ENCODE measurements at regions of chr15 and their contacts with region 1.

Region 1: DNA sequence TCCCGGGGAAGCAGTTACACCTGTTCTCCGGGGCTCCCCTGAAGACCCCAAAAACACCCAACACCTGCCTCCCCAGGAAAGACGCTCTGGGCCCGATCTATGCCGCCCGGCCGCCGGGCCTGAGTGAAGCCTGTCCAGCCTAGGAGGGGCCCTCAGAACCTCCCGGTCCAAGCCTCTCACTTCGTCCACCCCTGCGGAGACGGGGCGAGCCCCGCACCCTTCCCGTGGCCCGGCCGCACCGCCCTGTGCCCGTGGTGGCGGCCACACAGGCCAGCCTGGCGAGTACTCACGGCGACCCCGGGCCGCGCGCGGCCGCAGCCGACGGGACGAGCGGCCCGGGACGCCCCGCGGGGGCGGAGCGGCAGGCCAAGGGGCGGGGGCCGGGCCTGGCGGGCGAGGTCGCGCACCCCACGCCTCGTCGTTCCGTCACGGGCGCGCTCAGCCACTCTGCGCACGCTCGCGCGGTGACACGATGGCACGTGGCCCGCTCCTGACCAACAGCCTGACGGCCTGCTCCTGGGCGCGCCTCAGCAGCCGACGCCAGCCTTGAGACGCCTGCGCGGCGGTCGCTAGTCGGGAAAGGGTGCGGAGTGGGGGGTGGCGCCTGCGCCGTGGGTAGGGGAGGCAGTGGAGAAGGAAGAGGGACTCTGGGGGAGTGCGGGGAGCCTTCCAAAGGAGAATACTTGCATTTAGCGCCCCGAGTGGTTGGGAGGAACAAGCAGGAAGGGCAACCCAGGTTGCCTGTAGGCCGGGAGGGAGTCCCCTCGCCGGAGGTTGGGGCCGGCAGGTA is at the start of gene PARP6:
- DNase-seq: peak; percentile 97 to 98 (median 98)
- ATAC-seq: peak; percentile 99
- H3K4me3 ChIP-seq: peak within 1 kb of the TSS; percentile 74
- H3K27ac ChIP-seq: peak within 1 kb of the TSS; percentile 77
- H3K4me1 ChIP-seq: peaks cover 12 to 17% of the 10 kb centered on the region in 2 experiments; a peak in 4 of 5 replicates
- H3K27me3 ChIP-seq: no peaks in the 10 kb centered on the region
- CTCF ChIP-seq: peak; percentile 63 to 83 (median 70)
- EP300 ChIP-seq: peak; percentile 31; the same call in 1 of the 2 replicates
- POLR2A ChIP-seq: peak; percentile 66
- RAD21 ChIP-seq: 0 out of 4 replicates have a peak, but pooled peaks of 1 of the 2 experiments have one; percentile 8
- polyA plus RNA-seq, gene PARP6: 14.8 to 18.9 TPM

Region 2: DNA sequence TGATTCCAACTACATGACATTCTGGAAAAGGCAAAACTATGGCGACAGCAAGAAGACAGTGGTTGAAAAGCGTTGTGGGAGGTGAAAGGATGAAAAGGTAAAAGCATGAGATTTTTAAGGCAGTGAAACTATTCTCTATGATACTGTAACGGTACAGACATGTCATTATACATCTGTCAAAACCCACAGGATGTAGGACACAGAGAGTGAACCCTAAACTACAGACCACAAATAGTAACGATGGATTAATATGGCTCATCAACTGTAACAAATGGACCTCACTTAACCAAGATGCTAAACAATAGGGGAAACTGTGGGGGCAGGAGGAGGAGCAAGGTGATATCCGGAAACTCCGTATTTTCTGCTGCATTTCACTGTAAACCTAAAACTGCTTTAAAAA is 193.5 kb before region 1 on chr15:
- CTCF ChIA-PET with region 1: no interaction called
- POLR2A ChIA-PET with region 1: no interaction called
- in situ Hi-C with region 1: no loop called
- intact Hi-C with region 1: no loop called
- DNase-seq: no peak
- ATAC-seq: no peak
- H3K4me3 ChIP-seq: no peak overlapping the region
- H3K27ac ChIP-seq: no peak overlapping the region
- H3K4me1 ChIP-seq: no peaks in the 10 kb centered on the region
- H3K27me3 ChIP-seq: no peaks in the 10 kb centered on the region; a peak in 1 of 5 replicates
- CTCF ChIP-seq: no peak
- EP300 ChIP-seq: no peak
- POLR2A ChIP-seq: no peak
- RAD21 ChIP-seq: no peak

Region 3: GRCh38 chr15:72206677-72207000 is 65.8 kb before region 1 on chr15:
- CTCF ChIA-PET with region 1: no interaction called
- POLR2A ChIA-PET with region 1: no interaction called
- in situ Hi-C with region 1: loop called (anchors 5 kb)
- intact Hi-C with region 1: no loop called
- DNase-seq: no peak
- ATAC-seq: no peak
- H3K4me3 ChIP-seq: no peak overlapping the region
- H3K27ac ChIP-seq: no peak overlapping the region
- H3K4me1 ChIP-seq: peaks cover 0 to 3% of the 10 kb centered on the region in 2 experiments; a peak in 1 of 5 replicates
- H3K27me3 ChIP-seq: no peaks in the 10 kb centered on the region
- CTCF ChIP-seq: no peak
- EP300 ChIP-seq: no peak
- POLR2A ChIP-seq: no peak
- RAD21 ChIP-seq: no peak

Region 4: GRCh38 chr15:72237286-72238224 is 34.9 kb before region 1 on chr15:
- CTCF ChIA-PET with region 1: no interaction called
- POLR2A ChIA-PET with region 1: no interaction called
- in situ Hi-C with region 1: no loop called
- intact Hi-C with region 1: loop called (anchors 2 kb)
- DNase-seq: peak; percentile 89 to 95 (median 91)
- ATAC-seq: peak; percentile 97
- H3K4me3 ChIP-seq: peak overlapping the region; percentile 54
- H3K27ac ChIP-seq: peak overlapping the region; percentile 97
- H3K4me1 ChIP-seq: peaks cover 24 to 34% of the 10 kb centered on the region in 2 experiments
- H3K27me3 ChIP-seq: no peaks in the 10 kb centered on the region
- CTCF ChIP-seq: peak in 1 of 3 experiments; percentile 4; a peak in 1 of 6 replicates
- EP300 ChIP-seq: peak; percentile 88
- POLR2A ChIP-seq: peak; percentile 88
- RAD21 ChIP-seq: no peak; a peak in 1 of 4 replicates